ENCODE measurements at regions of chr13 and their contacts with region 1.

Region 1: DNA sequence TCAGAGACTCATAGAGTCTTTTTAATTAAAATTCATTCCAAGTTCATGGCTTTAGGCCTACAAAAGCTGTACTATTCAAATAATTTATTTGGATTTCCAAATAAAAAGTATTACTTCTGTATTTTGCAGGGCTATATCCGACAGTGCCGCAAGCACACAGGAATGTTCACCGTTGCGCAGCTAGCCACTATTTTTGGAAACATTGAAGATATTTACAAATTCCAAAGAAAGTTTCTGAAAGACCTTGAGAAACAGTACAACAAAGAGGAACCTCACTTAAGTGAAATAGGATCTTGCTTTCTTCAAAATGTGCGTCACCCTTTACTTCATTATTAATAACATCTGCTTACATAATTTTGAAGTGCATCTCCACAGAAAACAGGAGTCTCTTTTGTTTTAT is 20.5 kb upstream of the C1QTNF9 start:
- DNase-seq: no peak
- ATAC-seq: no peak
- H3K4me3 ChIP-seq: no peak overlapping the region
- H3K4me3 Mint-ChIP-seq: no peak overlapping the region
- H3K27ac ChIP-seq: no peak overlapping the region
- H3K27ac Mint-ChIP-seq: no peak overlapping the region
- H3K4me1 ChIP-seq: no peaks in the 10 kb centered on the region
- H3K4me1 Mint-ChIP-seq: peaks cover 5% of the 10 kb centered on the region
- H3K27me3 ChIP-seq: no peaks in the 10 kb centered on the region
- H3K27me3 Mint-ChIP-seq: no peaks in the 10 kb centered on the region
- CTCF ChIP-seq: no peak

Region 2: GRCh38 chr13:24443366-24443765 is 154.5 kb after region 1 on chr13:
- CTCF ChIA-PET with region 1: no interaction called
- POLR2A ChIA-PET with region 1: no interaction called
- intact Hi-C with region 1: loop called in 1 of 2 experiments (anchors 5 kb)
- DNase-seq: no peak
- ATAC-seq: no peak
- H3K4me3 ChIP-seq: no peak overlapping the region
- H3K4me3 Mint-ChIP-seq: no peak overlapping the region
- H3K27ac ChIP-seq: no peak overlapping the region
- H3K27ac Mint-ChIP-seq: no peak overlapping the region
- H3K4me1 ChIP-seq: no peaks in the 10 kb centered on the region
- H3K4me1 Mint-ChIP-seq: no peaks in the 10 kb centered on the region
- H3K27me3 ChIP-seq: no peaks in the 10 kb centered on the region
- H3K27me3 Mint-ChIP-seq: no peaks in the 10 kb centered on the region
- CTCF ChIP-seq: no peak

Region 3: GRCh38 chr13:24489721-24490120 is 200.9 kb after region 1 on chr13:
- CTCF ChIA-PET with region 1: no interaction called
- POLR2A ChIA-PET with region 1: no interaction called
- intact Hi-C with region 1: loop called in 1 of 2 experiments (anchors 10 kb)
- DNase-seq: no peak
- ATAC-seq: no peak
- H3K4me3 ChIP-seq: no peak overlapping the region
- H3K4me3 Mint-ChIP-seq: no peak overlapping the region
- H3K27ac ChIP-seq: no peak overlapping the region
- H3K27ac Mint-ChIP-seq: no peak overlapping the region
- H3K4me1 ChIP-seq: no peaks in the 10 kb centered on the region
- H3K4me1 Mint-ChIP-seq: no peaks in the 10 kb centered on the region
- H3K27me3 ChIP-seq: no peaks in the 10 kb centered on the region
- H3K27me3 Mint-ChIP-seq: no peaks in the 10 kb centered on the region
- CTCF ChIP-seq: no peak

Measured in CD4-positive, alpha-beta T cell (primary cell).